ENCODE measurements at regions of chr14 and their contacts with region 1.

Region 1: DNA sequence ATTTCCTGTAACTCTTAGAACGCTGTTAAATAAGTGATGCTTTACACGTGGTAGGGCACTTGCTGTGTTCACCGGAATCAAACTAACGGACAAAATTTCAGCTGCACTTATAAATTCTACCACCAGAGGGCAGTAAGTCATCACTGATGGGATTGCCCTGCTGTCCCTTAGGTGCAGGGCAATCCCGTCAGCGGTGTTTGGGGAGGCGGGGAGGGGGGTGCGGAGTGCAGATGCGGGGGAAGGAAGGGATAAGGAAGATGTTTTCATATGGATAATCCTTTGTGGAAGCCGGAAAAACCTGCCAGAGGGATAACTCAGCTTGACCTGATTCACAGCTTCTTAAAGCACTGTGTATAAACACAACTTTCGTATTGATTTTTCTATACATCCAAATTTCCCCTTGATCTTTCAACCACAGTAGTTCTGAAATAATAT is 21.7 kb upstream of the SLC10A1 start:
- DNase-seq: peak; percentile 7
- H3K4me3 ChIP-seq: no peak overlapping the region
- H3K27me3 ChIP-seq: peaks cover 11% of the 10 kb centered on the region
- CTCF ChIP-seq: peak; percentile 81

Region 2: GRCh38 chr14:70027785-70028428 is 209.1 kb after region 1 on chr14:
- CTCF ChIA-PET with region 1: interaction called, 54 read pairs
- POLR2A ChIA-PET with region 1: no interaction called
- DNase-seq: no peak
- H3K4me3 ChIP-seq: no peak overlapping the region
- H3K27me3 ChIP-seq: no peaks in the 10 kb centered on the region
- CTCF ChIP-seq: peak; percentile 85

Region 3: GRCh38 chr14:70073924-70074566 is 255.3 kb after region 1 on chr14:
- CTCF ChIA-PET with region 1: interaction called, 22 read pairs
- POLR2A ChIA-PET with region 1: no interaction called
- DNase-seq: no peak
- H3K4me3 ChIP-seq: no peak overlapping the region
- H3K27me3 ChIP-seq: no peaks in the 10 kb centered on the region
- CTCF ChIP-seq: peak; percentile 76

Measured in BJ (cell line).